K562 (cell line): ENCODE measurements at regions of chr3 and their contacts with region 1.

Region 1: GRCh38 chr3:77254967-77255831 is 215.3 kb downstream of the ROBO2 start:
- DNase-seq: peak; percentile 42 to 73 (median 46)
- ATAC-seq: peak; percentile 85
- H3K4me3 ChIP-seq: no peak overlapping the region
- H3K27ac ChIP-seq: no peak overlapping the region
- H3K4me1 ChIP-seq: no peaks in the 10 kb centered on the region; a peak in 1 of 5 replicates
- H3K27me3 ChIP-seq: no peaks in the 10 kb centered on the region
- CTCF ChIP-seq: peak; percentile 45 to 68 (median 57); a peak in 5 of 6 replicates
- EP300 ChIP-seq: no peak
- POLR2A ChIP-seq: no peak
- RAD21 ChIP-seq: peak; percentile 70 to 73

Region 2: DNA sequence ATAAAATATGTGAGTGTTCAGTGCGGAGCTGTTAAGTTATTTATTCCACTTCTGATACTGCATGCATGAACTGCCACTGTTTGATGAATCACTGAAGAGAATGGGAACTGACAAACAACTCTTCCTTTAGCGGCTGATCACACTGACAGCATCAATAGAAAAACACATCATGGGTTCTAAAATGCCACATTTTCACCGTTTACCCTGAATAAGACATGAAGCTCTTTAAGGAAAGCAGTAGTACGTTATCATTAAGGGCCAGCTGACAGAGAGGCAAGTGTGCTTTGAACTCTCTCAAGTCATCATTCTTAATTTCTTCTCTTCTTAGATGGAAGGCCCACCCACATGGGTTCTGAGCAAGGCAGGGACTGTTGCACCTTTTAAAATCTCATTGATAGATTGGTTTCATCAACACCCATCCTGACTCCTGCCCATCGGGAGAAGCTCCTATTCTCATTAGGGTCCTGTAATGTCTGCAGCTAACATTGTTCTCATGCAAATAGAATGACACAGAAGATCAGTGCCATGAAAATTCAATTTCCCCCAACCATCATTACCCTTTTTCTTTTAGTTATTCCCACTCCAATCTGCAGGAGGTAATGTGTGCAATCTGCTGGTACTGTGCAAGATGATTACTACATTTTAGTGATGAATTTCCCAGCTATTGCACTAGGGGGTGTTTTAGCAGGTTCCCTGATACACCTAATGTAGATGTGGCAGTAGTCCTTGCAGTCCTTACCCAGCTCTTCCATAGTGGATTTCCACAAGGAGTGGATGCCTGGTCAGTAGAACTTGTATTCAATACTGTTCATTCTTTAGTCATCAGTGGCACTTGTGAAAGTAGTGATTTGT is 96.2 kb before region 1 on chr3:
- CTCF ChIA-PET with region 1: no interaction called
- POLR2A ChIA-PET with region 1: no interaction called
- in situ Hi-C with region 1: no loop called
- intact Hi-C with region 1: loop called (anchors 1 kb)
- DNase-seq: peak in 1 of 4 experiments; percentile 20
- ATAC-seq: peak; percentile 80
- H3K4me3 ChIP-seq: no peak overlapping the region
- H3K27ac ChIP-seq: no peak overlapping the region
- H3K4me1 ChIP-seq: peaks cover 0 to 4% of the 10 kb centered on the region in 2 experiments; a peak in 1 of 5 replicates
- H3K27me3 ChIP-seq: no peaks in the 10 kb centered on the region
- CTCF ChIP-seq: peak; percentile 25 to 30 (median 30); a peak in 3 of 6 replicates
- EP300 ChIP-seq: no peak
- POLR2A ChIP-seq: no peak
- RAD21 ChIP-seq: no peak

Region 3: GRCh38 chr3:77179762-77180161 is 75.4 kb before region 1 on chr3:
- CTCF ChIA-PET with region 1: no interaction called
- POLR2A ChIA-PET with region 1: no interaction called
- in situ Hi-C with region 1: no loop called
- intact Hi-C with region 1: loop called (anchors 5 kb)
- DNase-seq: peak; percentile 40 to 79 (median 56)
- ATAC-seq: peak; percentile 88
- H3K4me3 ChIP-seq: no peak overlapping the region
- H3K27ac ChIP-seq: peak overlapping the region; percentile 77
- H3K4me1 ChIP-seq: peaks cover 0 to 4% of the 10 kb centered on the region in 2 experiments; a peak in 1 of 5 replicates
- H3K27me3 ChIP-seq: no peaks in the 10 kb centered on the region
- CTCF ChIP-seq: no peak
- EP300 ChIP-seq: peak; percentile 95
- POLR2A ChIP-seq: no peak
- RAD21 ChIP-seq: no peak

Region 4: GRCh38 chr3:77236118-77236517 is 19.1 kb before region 1 on chr3:
- CTCF ChIA-PET with region 1: no interaction called
- POLR2A ChIA-PET with region 1: no interaction called
- in situ Hi-C with region 1: no loop called
- intact Hi-C with region 1: no loop called
- DNase-seq: peak in 1 of 4 experiments; percentile 23
- ATAC-seq: no peak; the same call in 2 of the 3 replicates
- H3K4me3 ChIP-seq: no peak overlapping the region
- H3K27ac ChIP-seq: no peak overlapping the region
- H3K4me1 ChIP-seq: no peaks in the 10 kb centered on the region; a peak in 3 of 5 replicates
- H3K27me3 ChIP-seq: no peaks in the 10 kb centered on the region
- CTCF ChIP-seq: no peak
- EP300 ChIP-seq: peak; percentile 72
- POLR2A ChIP-seq: no peak
- RAD21 ChIP-seq: no peak